ENCODE measurements at regions of chr3 and their contacts with region 1.

Region 1: GRCh38 chr3:24290596-24290995 is 204.1 kb downstream of the THRB start:
- DNase-seq: no peak
- ATAC-seq: no peak
- H3K4me3 ChIP-seq: no peak overlapping the region
- H3K27ac ChIP-seq: no peak overlapping the region
- H3K4me1 ChIP-seq: no peaks in the 10 kb centered on the region
- H3K27me3 ChIP-seq: no peaks in the 10 kb centered on the region
- CTCF ChIP-seq: no peak
- POLR2A ChIP-seq: no peak
- RAD21 ChIP-seq: no peak

Region 2: GRCh38 chr3:24318668-24319287 is 28.2 kb after region 1 on chr3:
- CTCF ChIA-PET with region 1: no interaction called
- POLR2A ChIA-PET with region 1: no interaction called
- dilution Hi-C with region 1: no loop called
- in situ Hi-C with region 1: no loop called
- intact Hi-C with region 1: no loop called
- DNase-seq: peak; percentile 5
- ATAC-seq: no peak
- H3K4me3 ChIP-seq: no peak overlapping the region
- H3K27ac ChIP-seq: no peak overlapping the region
- H3K4me1 ChIP-seq: no peaks in the 10 kb centered on the region
- H3K27me3 ChIP-seq: no peaks in the 10 kb centered on the region
- CTCF ChIP-seq: no peak
- POLR2A ChIP-seq: no peak
- RAD21 ChIP-seq: no peak

Region 3: GRCh38 chr3:24389108-24390090 is 98.8 kb after region 1 on chr3:
- CTCF ChIA-PET with region 1: no interaction called
- POLR2A ChIA-PET with region 1: no interaction called
- dilution Hi-C with region 1: no loop called
- in situ Hi-C with region 1: no loop called
- intact Hi-C with region 1: no loop called
- DNase-seq: no peak
- ATAC-seq: no peak
- H3K4me3 ChIP-seq: no peak overlapping the region
- H3K27ac ChIP-seq: no peak overlapping the region
- H3K4me1 ChIP-seq: no peaks in the 10 kb centered on the region
- H3K27me3 ChIP-seq: no peaks in the 10 kb centered on the region
- CTCF ChIP-seq: no peak
- POLR2A ChIP-seq: no peak
- RAD21 ChIP-seq: no peak

Region 4: GRCh38 chr3:25573386-25574171 is 1283.0 kb after region 1 on chr3:
- CTCF ChIA-PET with region 1: no interaction called
- POLR2A ChIA-PET with region 1: no interaction called
- dilution Hi-C with region 1: no loop called
- in situ Hi-C with region 1: no loop called
- intact Hi-C with region 1: loop called (anchors 5 kb)
- DNase-seq: peak; percentile 65
- ATAC-seq: peak; percentile 79
- H3K4me3 ChIP-seq: no peak overlapping the region
- H3K27ac ChIP-seq: peak overlapping the region; percentile 53
- H3K4me1 ChIP-seq: peaks cover 9% of the 10 kb centered on the region
- H3K27me3 ChIP-seq: no peaks in the 10 kb centered on the region
- CTCF ChIP-seq: no peak
- POLR2A ChIP-seq: no peak
- RAD21 ChIP-seq: no peak

Region 5: DNA sequence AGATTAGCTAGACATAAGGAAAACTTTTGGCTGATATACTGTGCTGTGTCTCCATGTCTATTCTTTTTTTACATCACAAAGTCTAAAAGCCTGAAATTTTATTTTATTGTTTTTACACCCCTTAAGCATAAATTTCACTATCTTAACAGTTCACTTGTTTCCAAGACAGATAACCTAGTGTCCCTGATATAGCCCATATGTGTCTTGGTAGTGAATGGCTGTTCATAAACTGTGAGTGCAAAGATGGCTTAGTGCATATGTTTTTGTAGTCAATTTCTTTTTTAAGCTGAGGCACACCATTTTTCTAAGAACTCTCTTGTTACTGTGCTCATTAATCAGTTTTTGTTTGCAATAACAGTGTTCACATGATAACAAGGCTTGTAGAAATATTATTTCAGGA is 1880.4 kb after region 1 on chr3:
- CTCF ChIA-PET with region 1: no interaction called
- POLR2A ChIA-PET with region 1: no interaction called
- dilution Hi-C with region 1: no loop called
- in situ Hi-C with region 1: no loop called
- intact Hi-C with region 1: no loop called
- DNase-seq: no peak
- ATAC-seq: no peak
- H3K4me3 ChIP-seq: no peak overlapping the region
- H3K27ac ChIP-seq: no peak overlapping the region
- H3K4me1 ChIP-seq: no peaks in the 10 kb centered on the region
- H3K27me3 ChIP-seq: no peaks in the 10 kb centered on the region
- CTCF ChIP-seq: no peak
- POLR2A ChIP-seq: no peak
- RAD21 ChIP-seq: no peak